MCF 10A (cell line): ENCODE measurements at regions of chr1 and their contacts with region 1.

Region 1: GRCh38 chr1:20100632-20101355 is 18.5 kb downstream of the PLA2G2D start:
- DNase-seq: peak; percentile 61
- H3K4me3 Mint-ChIP-seq: no peak overlapping the region
- H3K27ac Mint-ChIP-seq: no peak overlapping the region
- H3K4me1 Mint-ChIP-seq: peaks cover 12% of the 10 kb centered on the region
- H3K27me3 Mint-ChIP-seq: no peaks in the 10 kb centered on the region
- CTCF ChIP-seq: peak; percentile 92

Region 2: DNA sequence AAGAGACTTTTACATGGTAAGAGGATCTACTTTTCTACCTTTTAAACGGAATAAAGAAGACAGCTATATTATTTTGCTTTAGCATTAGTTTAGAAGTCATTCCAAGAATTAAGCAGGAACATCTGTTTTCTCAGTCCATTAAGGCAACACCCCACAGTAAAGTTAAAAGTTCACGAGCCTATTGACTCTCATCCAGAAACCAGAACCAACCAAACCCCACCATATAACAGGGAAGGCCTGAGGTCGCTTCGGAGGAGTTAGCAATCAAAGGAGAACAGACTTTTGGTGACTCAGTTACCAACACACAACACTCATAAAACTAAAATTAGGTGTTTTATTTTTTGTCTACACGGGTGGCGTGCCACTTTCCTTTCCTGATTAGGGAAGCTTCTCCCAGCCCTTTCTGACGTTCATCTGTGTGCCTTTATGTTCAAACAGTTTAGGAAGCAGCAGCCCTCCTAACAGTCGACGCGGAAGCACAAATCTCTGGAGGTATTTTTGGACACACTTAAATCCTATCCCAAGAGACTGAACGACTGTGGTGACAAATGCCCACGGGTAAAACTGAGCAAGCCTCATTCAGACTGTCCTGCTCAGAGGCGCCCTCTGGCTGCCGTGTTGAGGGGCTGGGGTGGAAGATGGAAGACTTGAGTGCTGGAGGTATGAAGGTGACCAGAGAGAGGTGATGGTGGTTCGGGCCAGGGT is 94.1 kb after region 1 on chr1:
- CTCF ChIA-PET with region 1: interaction called, 4 read pairs
- POLR2A ChIA-PET with region 1: no interaction called
- intact Hi-C with region 1: loop called (anchors 2 kb)
- DNase-seq: peak; percentile 68
- H3K4me3 Mint-ChIP-seq: no peak overlapping the region
- H3K27ac Mint-ChIP-seq: no peak overlapping the region
- H3K4me1 Mint-ChIP-seq: peaks cover 31% of the 10 kb centered on the region
- H3K27me3 Mint-ChIP-seq: no peaks in the 10 kb centered on the region
- CTCF ChIP-seq: peak; percentile 59